A673 (cell line): ENCODE measurements at regions of chr19 and their contacts with region 1.

Region 1: GRCh38 chr19:15418588-15419412 is at the start of gene AKAP8L:
- DNase-seq: peak; percentile 100
- H3K4me3 ChIP-seq: peak within 1 kb of the TSS; percentile 80
- H3K27ac ChIP-seq: peak within 1 kb of the TSS; percentile 94
- H3K4me1 ChIP-seq: peaks cover 27% of the 10 kb centered on the region
- H3K27me3 ChIP-seq: no peaks in the 10 kb centered on the region
- CTCF ChIP-seq: peak; percentile 86
- total RNA-seq, gene AKAP8L: 132 and 147 TPM in 2 replicates

Region 2: DNA sequence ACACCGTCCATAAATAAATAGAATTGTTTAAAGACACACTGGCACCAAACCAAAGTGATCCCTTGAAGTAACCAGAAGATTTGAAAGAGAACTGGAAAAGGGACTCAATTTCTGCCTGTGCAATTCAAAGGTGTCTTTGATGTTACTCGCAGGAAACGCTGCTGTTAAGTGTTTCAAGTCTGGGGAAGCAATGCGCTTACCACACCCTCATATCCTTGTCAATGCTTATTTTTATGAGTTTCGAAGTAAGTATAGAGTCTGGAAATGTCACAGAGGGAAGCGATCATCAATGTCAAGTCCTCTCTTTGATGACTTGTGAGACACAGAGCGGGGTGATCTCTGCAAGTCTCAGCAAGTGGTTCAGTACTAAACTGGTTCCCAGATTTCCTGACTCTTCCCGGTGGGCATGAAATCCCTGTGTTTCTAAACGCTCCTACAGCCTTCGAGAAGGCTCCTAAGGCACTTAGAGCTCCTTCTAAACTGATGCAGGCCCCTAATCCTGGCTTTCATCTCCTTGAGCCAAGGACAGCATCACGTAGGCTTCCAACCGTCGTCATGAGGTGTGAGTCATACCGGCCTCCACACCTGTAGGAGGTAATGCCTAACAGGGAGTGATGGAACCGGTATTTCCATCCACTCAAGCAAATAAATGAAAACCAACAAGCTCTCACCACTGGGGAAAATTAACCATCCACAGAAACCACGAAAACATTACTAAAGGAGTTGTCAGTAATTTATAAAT is 288.8 kb before region 1 on chr19:
- CTCF ChIA-PET with region 1: no interaction called
- POLR2A ChIA-PET with region 1: interaction called, 15 read pairs
- intact Hi-C with region 1: no loop called
- DNase-seq: no peak
- H3K4me3 ChIP-seq: no peak overlapping the region
- H3K27ac ChIP-seq: no peak overlapping the region
- H3K4me1 ChIP-seq: peaks cover 5% of the 10 kb centered on the region
- H3K27me3 ChIP-seq: no peaks in the 10 kb centered on the region
- CTCF ChIP-seq: no peak

Region 3: GRCh38 chr19:15238471-15239051 is 180.2 kb before region 1 on chr19:
- CTCF ChIA-PET with region 1: no interaction called
- POLR2A ChIA-PET with region 1: no interaction called
- intact Hi-C with region 1: no loop called
- DNase-seq: no peak
- H3K4me3 ChIP-seq: no peak overlapping the region
- H3K27ac ChIP-seq: no peak overlapping the region
- H3K4me1 ChIP-seq: no peaks in the 10 kb centered on the region
- H3K27me3 ChIP-seq: no peaks in the 10 kb centered on the region
- CTCF ChIP-seq: no peak

Region 4: DNA sequence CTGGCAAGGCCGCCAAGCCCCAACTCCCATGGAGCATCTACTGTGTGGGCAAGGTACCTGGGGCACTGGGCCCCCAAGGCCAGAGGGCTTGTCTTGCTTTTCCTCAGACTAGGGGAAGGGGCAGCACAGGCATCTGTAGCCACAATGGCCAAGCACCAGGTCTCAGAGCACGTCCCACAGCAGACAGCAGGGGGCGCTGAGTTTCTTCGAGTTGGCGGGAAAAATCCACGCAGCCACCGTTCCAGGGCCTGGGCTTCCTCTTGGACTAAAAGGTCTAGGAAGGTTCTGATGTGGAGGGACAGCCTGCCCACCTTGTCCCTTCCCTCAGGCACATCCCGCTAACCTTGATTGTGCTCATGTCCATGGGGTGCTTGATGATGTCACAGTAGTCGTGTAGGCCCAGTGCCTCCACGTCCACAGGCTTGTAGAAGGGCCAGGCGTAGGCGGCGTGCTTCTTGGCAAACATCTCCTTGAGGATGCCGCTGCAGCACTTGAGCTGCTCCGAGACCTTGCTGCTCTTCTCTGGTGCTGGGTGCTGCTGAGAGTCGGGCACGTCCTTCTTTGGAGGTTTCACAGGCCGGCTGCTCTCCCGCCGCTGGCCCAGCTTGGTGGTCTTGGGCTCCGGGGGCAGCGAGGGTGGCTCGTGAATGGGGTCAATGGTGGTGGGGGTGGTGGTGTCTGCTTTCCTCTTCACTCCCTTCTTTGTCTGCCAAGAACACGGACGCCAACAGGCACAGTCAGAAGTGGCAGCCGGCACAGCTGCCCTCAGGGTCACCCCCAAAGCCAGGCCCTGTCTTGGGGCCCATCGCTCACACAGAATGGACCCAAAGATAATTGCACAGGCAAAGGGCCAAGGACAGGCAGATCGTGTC is 154.5 kb before region 1 on chr19:
- CTCF ChIA-PET with region 1: no interaction called
- POLR2A ChIA-PET with region 1: no interaction called
- intact Hi-C with region 1: loop called (anchors 10 kb)
- DNase-seq: peak; percentile 80
- H3K4me3 ChIP-seq: no peak overlapping the region
- H3K27ac ChIP-seq: peak overlapping the region; percentile 23
- H3K4me1 ChIP-seq: no peaks in the 10 kb centered on the region
- H3K27me3 ChIP-seq: no peaks in the 10 kb centered on the region
- CTCF ChIP-seq: peak; percentile 93

Region 5: DNA sequence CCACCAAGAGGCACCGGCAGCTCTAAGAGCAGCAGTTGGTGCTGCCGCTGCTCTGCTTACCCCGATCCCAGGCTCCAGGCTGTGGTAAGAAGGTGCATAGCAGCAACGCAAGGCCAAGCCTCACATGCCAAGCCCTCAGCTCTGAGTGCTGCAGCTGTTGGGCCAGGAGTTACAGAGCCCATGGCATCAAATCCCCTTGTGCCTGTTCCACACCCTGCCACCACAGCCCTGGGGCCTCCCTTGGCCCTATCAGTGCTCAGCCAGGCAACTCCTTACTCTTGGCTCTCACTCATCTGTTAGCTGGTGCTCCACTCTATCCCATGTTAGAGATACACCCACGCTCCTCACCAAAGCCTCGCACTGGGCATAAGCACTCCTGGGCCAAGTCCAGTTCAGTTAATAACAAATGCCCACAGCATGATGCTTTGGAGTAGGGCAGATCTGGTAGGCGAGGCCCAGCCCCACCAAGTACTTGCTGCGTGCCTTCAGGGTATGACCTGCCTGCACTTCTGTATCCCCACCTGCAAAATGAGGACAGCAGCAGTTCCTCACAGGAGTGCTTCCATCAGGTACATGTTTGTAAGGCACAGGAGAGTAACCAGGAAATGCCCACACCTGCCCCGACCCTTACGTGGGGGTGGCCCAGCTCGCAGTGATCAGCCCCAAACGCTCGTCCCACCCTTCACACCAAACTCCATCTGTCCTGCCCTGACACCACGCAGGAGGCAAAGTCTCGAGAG is 16.2 kb before region 1 on chr19:
- CTCF ChIA-PET with region 1: no interaction called
- POLR2A ChIA-PET with region 1: interaction called, 12 read pairs
- intact Hi-C with region 1: no loop called
- DNase-seq: no peak
- H3K4me3 ChIP-seq: no peak overlapping the region
- H3K27ac ChIP-seq: peak overlapping the region; percentile 23
- H3K4me1 ChIP-seq: peaks cover 4% of the 10 kb centered on the region
- H3K27me3 ChIP-seq: no peaks in the 10 kb centered on the region
- CTCF ChIP-seq: no peak

Region 6: DNA sequence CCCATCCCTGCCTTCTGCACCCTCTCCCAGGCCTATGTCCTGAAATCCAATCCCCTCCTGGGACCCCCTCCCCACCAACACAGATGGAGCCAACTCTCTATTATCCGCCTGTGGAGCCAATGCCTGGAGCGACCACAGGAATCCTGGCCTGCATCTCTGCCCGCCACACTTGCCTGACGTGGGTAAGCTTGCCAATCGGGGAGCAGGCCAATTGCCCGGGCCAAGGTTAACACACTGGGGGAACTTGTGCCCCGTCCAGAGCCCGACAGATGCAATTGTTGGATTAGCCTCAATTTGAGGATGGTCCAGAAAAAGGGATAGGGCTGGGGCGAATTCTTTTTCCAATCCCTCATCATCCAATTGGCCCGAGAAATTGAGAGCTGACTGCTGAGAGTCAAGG is 25.0 kb after region 1 on chr19:
- CTCF ChIA-PET with region 1: no interaction called
- POLR2A ChIA-PET with region 1: no interaction called
- intact Hi-C with region 1: no loop called
- DNase-seq: no peak
- H3K4me3 ChIP-seq: no peak overlapping the region
- H3K27ac ChIP-seq: no peak overlapping the region
- H3K4me1 ChIP-seq: peaks cover 4% of the 10 kb centered on the region
- H3K27me3 ChIP-seq: no peaks in the 10 kb centered on the region
- CTCF ChIP-seq: no peak

Region 7: GRCh38 chr19:15466851-15467733 is 48.3 kb after region 1 on chr19:
- CTCF ChIA-PET with region 1: no interaction called
- POLR2A ChIA-PET with region 1: no interaction called
- intact Hi-C with region 1: no loop called
- DNase-seq: peak; percentile 72
- H3K4me3 ChIP-seq: no peak overlapping the region
- H3K27ac ChIP-seq: peak overlapping the region; percentile 32
- H3K4me1 ChIP-seq: peaks cover 14% of the 10 kb centered on the region
- H3K27me3 ChIP-seq: no peaks in the 10 kb centered on the region
- CTCF ChIP-seq: no peak

Region 8: GRCh38 chr19:15508035-15508710 is 89.4 kb after region 1 on chr19 and contains the start of gene CYP4F22:
- CTCF ChIA-PET with region 1: no interaction called
- POLR2A ChIA-PET with region 1: no interaction called
- intact Hi-C with region 1: loop called (anchors 5 kb)
- DNase-seq: peak; percentile 65
- H3K4me3 ChIP-seq: peak within 1 kb of the TSS; percentile 71
- H3K27ac ChIP-seq: peak within 1 kb of the TSS; percentile 81
- H3K4me1 ChIP-seq: peaks cover 35% of the 10 kb centered on the region
- H3K27me3 ChIP-seq: no peaks in the 10 kb centered on the region
- CTCF ChIP-seq: no peak
- total RNA-seq, gene CYP4F22: 78.3 and 79.7 TPM in 2 replicates